ENCODE measurements at regions of chr14 and their contacts with region 1.

Region 1: DNA sequence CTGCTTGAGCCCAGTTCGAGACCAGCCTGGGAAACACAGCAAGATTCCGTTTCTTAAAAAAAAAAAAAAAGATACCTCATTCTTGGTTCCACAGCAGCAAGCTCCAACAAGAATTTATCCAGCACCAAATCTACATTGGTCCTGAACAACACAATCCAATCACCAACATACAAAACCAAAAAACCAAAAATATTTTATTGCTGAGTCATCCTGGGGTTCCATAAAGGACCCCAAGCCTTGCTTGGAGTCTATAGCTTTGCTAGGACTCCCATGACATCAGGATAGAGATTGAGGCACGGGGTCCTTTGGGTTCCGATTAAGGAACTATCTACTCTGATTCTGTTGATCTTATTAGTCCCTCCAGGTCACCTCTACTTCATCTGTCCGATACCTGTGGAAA is 7.7 kb downstream of the OSGEP start:
- DNase-seq: no peak
- H3K4me3 ChIP-seq: no peak overlapping the region
- H3K27ac ChIP-seq: no peak overlapping the region
- H3K4me1 ChIP-seq: no peaks in the 10 kb centered on the region
- H3K27me3 ChIP-seq: no peaks in the 10 kb centered on the region
- CTCF ChIP-seq: no peak
- EP300 ChIP-seq: no peak
- POLR2A ChIP-seq: no peak
- RAD21 ChIP-seq: no peak

Region 2: DNA sequence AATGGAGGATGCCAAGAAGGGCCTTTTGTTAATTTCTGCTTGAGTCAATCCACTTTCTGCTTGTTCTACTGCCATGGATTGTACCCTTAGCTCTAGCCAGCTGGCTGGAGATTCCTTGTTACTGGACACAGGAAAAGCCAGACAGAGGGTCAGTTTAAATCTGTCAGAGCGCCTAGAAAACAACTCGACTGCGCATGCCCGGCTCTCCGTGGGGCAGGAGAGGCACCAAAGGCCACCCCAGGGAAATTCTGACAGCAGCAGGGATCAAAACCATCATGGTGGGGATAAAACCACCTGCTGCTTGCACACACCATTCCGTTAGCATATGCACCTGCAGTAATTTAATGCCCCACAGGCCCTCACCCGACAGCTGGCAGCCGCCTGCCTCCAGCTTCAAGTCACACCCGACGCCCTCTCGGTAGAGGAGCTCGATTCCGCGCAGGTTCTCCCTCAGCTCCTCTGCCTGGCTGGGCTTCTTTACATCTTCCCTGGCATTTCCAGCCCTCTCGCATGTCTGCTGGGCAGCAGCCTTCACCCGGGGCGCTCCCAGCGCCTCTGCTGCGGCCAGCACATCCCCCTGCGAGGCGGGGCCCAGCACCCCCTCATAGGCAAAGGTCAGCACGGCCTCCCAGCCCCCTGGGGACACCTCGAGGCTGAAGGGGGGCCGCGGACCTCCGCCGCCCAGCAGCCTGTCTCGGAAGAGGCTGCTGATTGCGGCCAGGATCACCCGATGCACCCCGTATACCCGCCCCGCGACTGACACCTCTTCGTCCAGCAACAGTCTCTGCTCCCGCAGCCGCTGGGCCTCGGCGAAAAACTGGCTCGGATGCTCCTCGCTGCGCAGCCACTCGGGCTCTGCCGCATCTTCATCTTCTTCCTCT is 11.9 kb before region 1 on chr14:
- CTCF ChIA-PET with region 1: interaction called, 4 read pairs
- POLR2A ChIA-PET with region 1: interaction called, 54 read pairs
- DNase-seq: peak in 1 of 2 experiments; percentile 61
- H3K4me3 ChIP-seq: peak overlapping the region; percentile 21 to 61 (median 32); a peak in 7 of 8 replicates
- H3K27ac ChIP-seq: no peak overlapping the region
- H3K4me1 ChIP-seq: peaks cover 4 to 10% (median 9%) of the 10 kb centered on the region in 4 experiments; a peak in 6 of 7 replicates
- H3K27me3 ChIP-seq: peaks cover 0 to 20% (median 14%) of the 10 kb centered on the region in 4 experiments; a peak in 5 of 7 replicates
- CTCF ChIP-seq: no peak
- EP300 ChIP-seq: no peak
- POLR2A ChIP-seq: no peak
- RAD21 ChIP-seq: no peak

Region 3: GRCh38 chr14:20482382-20482781 is 35.5 kb after region 1 on chr14:
- CTCF ChIA-PET with region 1: no interaction called
- POLR2A ChIA-PET with region 1: no interaction called
- DNase-seq: no peak
- H3K4me3 ChIP-seq: no peak overlapping the region
- H3K27ac ChIP-seq: no peak overlapping the region
- H3K4me1 ChIP-seq: peaks cover 0 to 5% (median under 1%) of the 10 kb centered on the region in 4 experiments; a peak in 1 of 7 replicates
- H3K27me3 ChIP-seq: no peaks in the 10 kb centered on the region
- CTCF ChIP-seq: no peak
- EP300 ChIP-seq: no peak
- POLR2A ChIP-seq: no peak
- RAD21 ChIP-seq: no peak

Measured in H1 (cell line).